ENCODE measurements at regions of chr15 and their contacts with region 1.

Region 1: DNA sequence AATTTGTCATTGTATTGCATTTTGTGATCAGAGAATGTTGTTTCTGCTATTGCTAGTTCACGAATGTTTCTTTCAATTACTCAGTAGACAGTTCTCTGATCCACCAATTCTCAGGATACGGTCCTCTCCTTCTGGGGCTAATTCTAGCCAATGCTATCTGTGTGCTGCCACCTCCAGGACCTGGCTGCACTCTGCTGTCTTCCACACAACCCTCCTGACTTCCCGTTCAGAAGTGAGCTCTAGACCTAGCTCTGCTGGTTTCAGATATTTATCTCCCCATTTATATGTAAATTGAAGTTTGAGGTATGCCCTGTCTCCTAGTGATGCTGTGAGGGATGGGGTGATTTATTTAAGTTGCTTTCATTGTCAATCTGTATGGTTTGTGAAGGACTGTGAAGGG is 21.7 kb upstream of the UBL7 start:
- DNase-seq: no peak
- ATAC-seq: no peak
- H3K4me3 ChIP-seq: no peak overlapping the region
- H3K27ac ChIP-seq: no peak overlapping the region
- H3K4me1 ChIP-seq: no peaks in the 10 kb centered on the region
- H3K27me3 ChIP-seq: no peaks in the 10 kb centered on the region
- CTCF ChIP-seq: no peak

Region 2: GRCh38 chr15:74365611-74366440 is 116.8 kb before region 1 on chr15:
- intact Hi-C with region 1: no loop called
- DNase-seq: peak; percentile 77
- ATAC-seq: peak; percentile 82
- H3K4me3 ChIP-seq: peak overlapping the region; percentile 55
- H3K27ac ChIP-seq: peak overlapping the region; percentile 34
- H3K4me1 ChIP-seq: peaks cover 10% of the 10 kb centered on the region
- H3K27me3 ChIP-seq: peaks cover 14% of the 10 kb centered on the region
- CTCF ChIP-seq: no peak

Region 3: GRCh38 chr15:74626752-74627692 is 144.4 kb after region 1 on chr15:
- intact Hi-C with region 1: loop called (anchors 5 kb)
- DNase-seq: no peak
- ATAC-seq: peak; percentile 5
- H3K4me3 ChIP-seq: no peak overlapping the region
- H3K27ac ChIP-seq: peak overlapping the region; percentile 3
- H3K4me1 ChIP-seq: peaks cover 10% of the 10 kb centered on the region
- H3K27me3 ChIP-seq: no peaks in the 10 kb centered on the region
- CTCF ChIP-seq: no peak